Heart left ventricle (tissue), 16 donors: ENCODE measurements at regions of chr3 and their contacts with region 1.

Region 1: GRCh38 chr3:133588784-133589465 is 15.4 kb downstream of the CDV3 start:
- DNase-seq: no peak
- ATAC-seq: no peak
- H3K4me3 ChIP-seq: no peak overlapping the region
- H3K27ac ChIP-seq: peak overlapping the region in 1 of 12 donors; percentile 41
- H3K4me1 ChIP-seq: peaks cover 0 to 12% (median 2%) of the 10 kb centered on the region in 12 donors
- H3K27me3 ChIP-seq: no peaks in the 10 kb centered on the region
- CTCF ChIP-seq: no peak
- POLR2A ChIP-seq: no peak

Region 2: GRCh38 chr3:133644768-133645167 is 55.8 kb after region 1 on chr3:
- intact Hi-C with region 1: loop called in 1 of 10 experiments (anchors 10 kb)
- DNase-seq: no peak
- ATAC-seq: no peak
- H3K4me3 ChIP-seq: no peak overlapping the region
- H3K27ac ChIP-seq: no peak overlapping the region
- H3K4me1 ChIP-seq: peaks cover 0 to 3% (median 0%) of the 10 kb centered on the region in 12 donors
- H3K27me3 ChIP-seq: no peaks in the 10 kb centered on the region
- CTCF ChIP-seq: no peak
- POLR2A ChIP-seq: no peak